ENCODE measurements at regions of chr7 and their contacts with region 1.

Region 1: DNA sequence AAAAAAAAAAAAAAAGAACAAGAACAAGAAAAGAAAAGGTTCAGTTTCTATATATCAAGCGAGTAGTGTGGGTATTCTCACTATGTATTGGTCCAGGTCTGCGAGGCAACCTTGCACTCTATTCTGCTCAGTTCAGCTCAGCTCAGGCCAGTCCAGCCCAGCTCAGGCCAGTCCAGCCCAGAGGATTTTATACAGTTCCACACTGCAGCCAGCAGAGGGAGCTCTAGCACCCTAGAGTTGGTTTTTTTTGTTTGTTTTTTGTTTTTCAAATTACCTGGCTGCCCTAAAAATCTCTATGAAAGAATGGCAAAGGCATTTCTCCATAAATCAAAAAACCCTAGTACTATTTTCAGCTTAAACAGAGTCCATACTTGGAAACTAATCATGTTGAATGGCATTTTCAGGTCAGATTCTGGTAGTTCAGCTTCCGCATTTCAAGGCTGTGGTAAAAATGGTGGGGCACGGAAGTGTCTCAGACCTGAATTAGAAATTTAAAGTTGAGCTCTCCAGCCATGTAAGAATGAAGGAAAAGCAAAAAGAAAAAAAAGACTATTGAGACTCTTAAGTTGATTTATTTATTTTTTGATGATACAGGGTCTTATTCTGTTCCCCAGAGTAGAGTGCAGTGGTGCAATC is 55.2 kb upstream of the GSDME start:
- DNase-seq: peak; percentile 61 to 75
- H3K4me3 ChIP-seq: no peak overlapping the region
- H3K27ac ChIP-seq: no peak overlapping the region
- H3K4me1 ChIP-seq: no peaks in the 10 kb centered on the region
- H3K27me3 ChIP-seq: no peaks in the 10 kb centered on the region
- CTCF ChIP-seq: peak; percentile 65 to 94 (median 87)
- POLR2A ChIP-seq: no peak

Region 2: DNA sequence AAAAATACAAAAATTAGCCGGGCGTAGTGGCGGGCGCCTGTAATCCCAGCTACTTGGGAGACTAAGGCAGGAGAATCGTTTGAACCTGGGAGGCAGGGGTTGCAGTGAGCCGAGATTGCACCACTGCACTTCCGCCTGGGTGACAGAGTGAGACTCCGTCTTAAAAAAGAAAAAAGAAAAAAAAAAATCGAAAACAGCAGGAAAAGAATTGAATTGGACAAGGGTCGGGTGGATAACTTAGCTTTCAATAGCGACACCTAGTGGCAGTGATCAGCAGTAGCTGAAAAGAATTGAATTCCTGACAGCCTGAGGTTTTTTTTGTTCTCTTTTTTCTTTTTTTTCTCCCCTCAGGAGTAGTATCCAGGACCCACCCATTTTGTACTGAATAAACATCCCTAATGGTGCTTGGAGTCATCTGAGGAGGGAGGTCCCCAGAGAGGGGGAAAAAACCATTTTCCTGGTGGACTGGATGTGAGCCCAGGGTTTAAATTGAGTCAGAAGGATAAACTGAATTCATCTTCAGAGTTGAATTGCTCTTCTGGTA is 257.5 kb after region 1 on chr7:
- intact Hi-C with region 1: loop called (anchors 5 kb)
- DNase-seq: peak; percentile 56 to 59
- H3K4me3 ChIP-seq: peak overlapping the region in 1 of 3 donors; percentile 10
- H3K27ac ChIP-seq: peak overlapping the region in 2 of 3 donors; percentile 25 to 47
- H3K4me1 ChIP-seq: peaks cover 0 to 9% of the 10 kb centered on the region in 2 donors
- H3K27me3 ChIP-seq: no peaks in the 10 kb centered on the region
- CTCF ChIP-seq: peak; percentile 84 to 98 (median 90)
- POLR2A ChIP-seq: no peak

Region 3: GRCh38 chr7:25093268-25093826 is 280.9 kb after region 1 on chr7:
- intact Hi-C with region 1: loop called (anchors 5 kb)
- DNase-seq: peak; percentile 63 to 77
- H3K4me3 ChIP-seq: no peak overlapping the region
- H3K27ac ChIP-seq: no peak overlapping the region
- H3K4me1 ChIP-seq: no peaks in the 10 kb centered on the region
- H3K27me3 ChIP-seq: no peaks in the 10 kb centered on the region
- CTCF ChIP-seq: peak; percentile 46 to 77 (median 57)
- POLR2A ChIP-seq: no peak

Measured in thyroid gland (tissue), 4 donors.